ENCODE measurements at regions of chr6 and their contacts with region 1.

Region 1: DNA sequence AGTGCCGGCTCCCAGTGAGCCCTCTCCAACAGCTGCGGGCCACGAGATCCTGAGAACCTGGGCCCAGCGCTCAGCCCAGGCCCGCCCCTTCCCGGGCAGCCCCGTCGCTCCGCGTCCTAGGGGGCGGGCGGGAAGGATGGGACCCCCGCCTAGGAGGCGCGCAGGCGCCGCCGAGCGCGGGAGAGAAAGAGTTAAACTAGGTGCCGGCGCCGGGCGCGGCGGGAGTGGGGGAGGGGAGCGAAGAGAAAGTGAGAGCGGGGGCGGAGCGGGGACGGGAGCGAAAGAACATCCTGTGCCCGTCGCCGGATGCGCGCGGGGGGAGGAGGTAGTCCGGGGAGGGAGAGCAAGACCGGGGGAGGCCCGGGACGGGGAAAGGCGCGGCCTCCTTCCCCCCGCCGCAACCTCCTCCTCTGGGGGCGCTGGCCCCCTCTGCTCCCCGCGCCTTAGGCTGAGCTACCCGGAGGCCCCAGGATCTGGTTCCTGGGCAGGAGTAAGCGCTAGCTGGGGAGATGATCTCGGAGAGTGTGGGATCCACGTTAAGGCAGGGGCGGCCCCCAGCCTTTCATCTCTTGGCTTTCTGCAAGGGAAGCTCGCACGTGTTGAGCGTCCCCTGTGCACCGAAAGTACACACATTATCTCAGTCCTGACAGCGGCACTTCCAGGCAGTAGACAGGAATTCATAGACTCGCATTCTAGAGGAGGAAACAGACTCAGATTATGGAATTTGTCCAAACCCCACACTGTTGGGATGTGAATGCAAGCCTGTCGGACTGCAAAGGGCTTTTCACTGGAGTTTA is 4.9 kb upstream of the ARMC12 start:
- DNase-seq: peak; percentile 93
- ATAC-seq: peak; percentile 69
- H3K4me3 Mint-ChIP-seq: peak overlapping the region; percentile 90
- H3K27ac Mint-ChIP-seq: peak overlapping the region; percentile 93
- H3K4me1 Mint-ChIP-seq: peaks cover 62% of the 10 kb centered on the region
- H3K27me3 Mint-ChIP-seq: no peaks in the 10 kb centered on the region
- CTCF ChIP-seq: no peak

Region 2: GRCh38 chr6:35342258-35343091 is 389.5 kb before region 1 on chr6 and contains the start of gene PPARD:
- CTCF ChIA-PET with region 1: no interaction called
- POLR2A ChIA-PET with region 1: interaction called, 3 read pairs
- intact Hi-C with region 1: loop called (anchors 5 kb)
- DNase-seq: peak; percentile 99
- ATAC-seq: peak; percentile 98
- H3K4me3 Mint-ChIP-seq: peak within 1 kb of the TSS; percentile 87
- H3K27ac Mint-ChIP-seq: peak within 1 kb of the TSS; percentile 91
- H3K4me1 Mint-ChIP-seq: peaks cover 59% of the 10 kb centered on the region
- H3K27me3 Mint-ChIP-seq: no peaks in the 10 kb centered on the region
- CTCF ChIP-seq: peak; percentile 62
- total RNA-seq, gene PPARD: 20.2 and 21.4 TPM in 2 replicates

Region 3: GRCh38 chr6:35522660-35523658 is 209.0 kb before region 1 on chr6:
- CTCF ChIA-PET with region 1: interaction called, 66 read pairs
- POLR2A ChIA-PET with region 1: no interaction called
- intact Hi-C with region 1: loop called (anchors 1 kb)
- DNase-seq: peak; percentile 54
- ATAC-seq: peak; percentile 96
- H3K4me3 Mint-ChIP-seq: peak overlapping the region; percentile 69
- H3K27ac Mint-ChIP-seq: no peak overlapping the region
- H3K4me1 Mint-ChIP-seq: peaks cover 8% of the 10 kb centered on the region
- H3K27me3 Mint-ChIP-seq: peaks cover 3% of the 10 kb centered on the region
- CTCF ChIP-seq: peak; percentile 98

Region 4: DNA sequence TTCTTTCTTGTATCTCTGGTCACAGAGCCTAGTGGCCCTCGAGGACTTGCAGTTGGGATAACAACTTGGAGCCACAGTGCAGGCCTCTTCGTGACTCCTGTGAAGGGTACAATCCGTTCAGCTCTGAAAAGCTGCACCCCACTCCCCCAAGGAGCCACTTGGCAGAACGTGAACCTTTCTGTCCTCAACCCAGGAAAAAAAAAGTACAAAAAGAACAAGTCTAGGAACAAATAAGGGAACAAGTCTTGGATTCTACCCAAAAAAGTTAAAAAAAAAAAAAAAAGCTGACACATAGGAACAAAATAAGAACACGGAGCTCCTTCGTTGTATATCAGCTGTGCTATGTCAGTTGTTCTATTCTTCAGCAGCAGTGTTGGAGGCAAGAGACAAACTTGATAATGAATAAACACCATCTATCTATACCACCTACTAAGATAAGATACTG is 141.3 kb before region 1 on chr6:
- CTCF ChIA-PET with region 1: interaction called, 177 read pairs
- POLR2A ChIA-PET with region 1: interaction called, 4 read pairs
- intact Hi-C with region 1: no loop called
- DNase-seq: no peak
- ATAC-seq: no peak
- H3K4me3 Mint-ChIP-seq: no peak overlapping the region
- H3K27ac Mint-ChIP-seq: no peak overlapping the region
- H3K4me1 Mint-ChIP-seq: peaks cover 10% of the 10 kb centered on the region
- H3K27me3 Mint-ChIP-seq: no peaks in the 10 kb centered on the region
- CTCF ChIP-seq: no peak

Region 5: GRCh38 chr6:35688581-35689322 is 43.2 kb before region 1 on chr6 and contains the start of gene FKBP5:
- CTCF ChIA-PET with region 1: interaction called, 10 read pairs
- POLR2A ChIA-PET with region 1: interaction called, 11 read pairs
- intact Hi-C with region 1: loop called (anchors 1 kb)
- DNase-seq: peak; percentile 86
- ATAC-seq: peak; percentile 96
- H3K4me3 Mint-ChIP-seq: peak within 1 kb of the TSS; percentile 93
- H3K27ac Mint-ChIP-seq: peak within 1 kb of the TSS; percentile 87
- H3K4me1 Mint-ChIP-seq: peaks cover 21% of the 10 kb centered on the region
- H3K27me3 Mint-ChIP-seq: no peaks in the 10 kb centered on the region
- CTCF ChIP-seq: no peak
- total RNA-seq, gene FKBP5: 17.1 TPM in 2 replicates

Measured in activated B cell treated with CpG ODN at 0.5 μM for 24 hours (primary cell).